MCF 10A (cell line): ENCODE measurements at regions of chr14 and their contacts with region 1.

Region 1: DNA sequence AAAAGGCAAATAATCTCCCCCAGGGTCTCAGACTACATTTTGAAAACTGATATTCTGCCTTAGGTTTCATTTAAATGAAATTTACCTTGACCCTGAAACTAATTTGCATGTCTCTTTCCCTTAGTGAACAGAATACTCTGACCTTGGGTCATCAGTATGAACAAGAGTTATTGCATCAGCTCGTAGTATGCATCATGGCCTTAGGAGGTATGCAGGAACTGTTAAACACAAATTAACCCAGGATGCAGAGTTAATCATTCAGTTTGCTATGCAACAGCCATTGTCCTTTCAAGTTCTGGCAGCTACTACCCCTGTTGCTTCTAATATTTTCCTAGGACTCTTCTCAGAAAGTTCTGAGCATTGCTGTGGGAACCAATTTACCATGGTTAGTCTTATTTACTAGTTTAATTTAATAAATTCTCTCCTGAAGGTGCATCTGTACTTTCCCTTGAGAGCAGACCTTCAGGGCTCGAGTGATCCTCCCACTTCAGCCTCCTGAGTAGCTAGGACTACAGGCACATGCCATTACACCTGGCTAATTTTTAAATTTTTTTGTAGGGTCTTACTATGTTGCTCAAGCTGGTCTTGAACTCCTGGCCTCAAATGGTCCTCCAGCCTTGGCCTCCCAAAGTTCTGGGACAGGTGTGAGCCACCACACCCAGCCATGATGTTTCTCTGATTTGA is 126.7 kb downstream of the TTC6 start:
- DNase-seq: peak; percentile 23
- H3K4me3 Mint-ChIP-seq: no peak overlapping the region
- H3K27ac Mint-ChIP-seq: no peak overlapping the region
- H3K4me1 Mint-ChIP-seq: no peaks in the 10 kb centered on the region
- H3K27me3 Mint-ChIP-seq: no peaks in the 10 kb centered on the region
- CTCF ChIP-seq: no peak

Region 2: DNA sequence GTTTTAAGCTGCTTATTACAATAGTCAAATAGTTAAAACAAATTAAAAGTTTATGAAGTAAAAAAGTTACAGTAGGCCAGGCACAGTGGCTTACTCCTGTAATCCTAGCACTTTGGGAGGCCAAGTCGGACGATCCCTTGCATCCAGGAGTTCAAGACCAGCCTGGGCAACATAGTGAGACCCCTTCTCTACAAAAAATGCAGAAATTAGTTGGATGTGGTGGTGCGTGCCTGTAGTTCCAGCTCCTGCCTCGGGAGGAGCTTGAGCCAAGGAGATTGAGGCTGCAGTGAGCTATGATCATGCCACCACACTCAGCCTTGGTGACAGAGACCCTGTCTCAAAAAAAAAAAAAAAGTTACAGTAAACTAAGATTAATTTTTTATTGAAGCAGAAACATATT is 381.8 kb before region 1 on chr14:
- CTCF ChIA-PET with region 1: interaction called, 11 read pairs
- POLR2A ChIA-PET with region 1: no interaction called
- intact Hi-C with region 1: no loop called
- DNase-seq: no peak
- H3K4me3 Mint-ChIP-seq: no peak overlapping the region
- H3K27ac Mint-ChIP-seq: no peak overlapping the region
- H3K4me1 Mint-ChIP-seq: no peaks in the 10 kb centered on the region
- H3K27me3 Mint-ChIP-seq: no peaks in the 10 kb centered on the region
- CTCF ChIP-seq: no peak

Region 3: GRCh38 chr14:37599507-37600368 is 122.4 kb before region 1 on chr14:
- CTCF ChIA-PET with region 1: no interaction called
- POLR2A ChIA-PET with region 1: no interaction called
- intact Hi-C with region 1: no loop called
- DNase-seq: no peak
- H3K4me3 Mint-ChIP-seq: no peak overlapping the region
- H3K27ac Mint-ChIP-seq: no peak overlapping the region
- H3K4me1 Mint-ChIP-seq: no peaks in the 10 kb centered on the region
- H3K27me3 Mint-ChIP-seq: no peaks in the 10 kb centered on the region
- CTCF ChIP-seq: no peak

Region 4: DNA sequence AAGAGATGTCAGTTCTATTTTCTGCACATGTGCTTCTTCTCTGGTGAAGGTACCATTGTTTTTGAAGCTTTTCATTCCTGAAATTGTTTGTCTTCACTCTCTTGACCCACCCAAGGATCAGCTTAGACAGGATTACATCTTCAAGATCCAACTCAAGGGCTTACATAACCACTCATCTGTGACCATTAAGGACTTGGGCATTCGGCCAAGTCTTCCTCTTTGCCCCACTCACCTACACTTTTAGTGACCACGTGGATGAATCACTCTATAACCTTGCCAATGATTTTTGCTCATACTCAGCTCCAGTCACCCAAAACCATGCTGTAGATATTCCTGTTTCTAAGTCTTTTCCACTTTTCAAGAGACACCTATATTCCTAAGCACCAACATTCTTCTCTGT is 449.1 kb after region 1 on chr14:
- CTCF ChIA-PET with region 1: no interaction called
- POLR2A ChIA-PET with region 1: no interaction called
- intact Hi-C with region 1: no loop called
- DNase-seq: peak; percentile 57
- H3K4me3 Mint-ChIP-seq: no peak overlapping the region
- H3K27ac Mint-ChIP-seq: peak overlapping the region; percentile 20
- H3K4me1 Mint-ChIP-seq: peaks cover 20% of the 10 kb centered on the region
- H3K27me3 Mint-ChIP-seq: no peaks in the 10 kb centered on the region
- CTCF ChIP-seq: no peak